HCT116 (cell line): ENCODE measurements at regions of chr18 and their contacts with region 1.

Region 1: DNA sequence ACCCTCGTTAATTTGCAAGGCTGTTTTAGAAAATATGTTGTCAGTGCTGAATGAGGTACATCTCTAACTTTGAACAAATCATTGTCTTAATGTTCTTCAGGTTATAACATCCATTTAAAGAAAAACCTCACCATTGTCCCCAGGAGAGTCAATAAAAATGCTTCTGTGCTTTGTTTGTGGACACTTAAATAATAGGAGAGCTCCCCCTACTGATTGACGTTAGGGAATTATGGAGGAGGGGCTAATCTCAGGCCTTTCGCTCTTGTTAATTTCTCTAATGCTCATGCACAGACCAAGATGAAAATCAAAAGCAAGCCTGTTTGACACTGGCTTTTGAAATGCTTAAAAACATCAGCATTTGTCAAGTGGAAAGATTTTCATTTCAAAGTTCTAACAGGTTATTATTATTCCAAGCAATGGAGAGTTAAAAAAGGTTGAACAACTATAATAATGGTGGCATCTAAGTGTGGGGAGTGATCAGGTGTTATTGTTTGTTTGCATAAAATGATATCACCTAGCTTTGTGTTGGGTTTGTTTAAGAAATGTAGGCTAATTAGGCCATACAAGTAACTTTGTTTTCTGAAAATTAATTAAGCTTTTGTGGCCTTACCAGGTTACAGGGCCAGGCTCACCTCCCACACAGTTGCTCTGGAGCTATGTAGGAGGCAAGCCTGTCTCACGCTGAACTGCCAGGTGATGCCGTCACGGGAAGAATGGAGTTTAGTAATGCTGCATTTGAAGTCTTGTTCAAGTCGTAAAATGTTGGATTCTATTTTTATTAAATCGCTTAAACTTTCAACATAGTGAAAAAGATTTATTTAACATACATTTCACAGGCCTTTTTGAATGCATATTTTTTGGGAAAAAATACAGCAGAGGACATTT is 51.7 kb upstream of the SMIM21 start:
- DNase-seq: peak; percentile 51
- ATAC-seq: peak; percentile 96
- H3K4me3 ChIP-seq: no peak overlapping the region
- H3K27ac ChIP-seq: no peak overlapping the region
- H3K4me1 ChIP-seq: peaks cover 0 to 10% of the 10 kb centered on the region in 2 experiments; a peak in 1 of 4 replicates
- H3K27me3 ChIP-seq: no peaks in the 10 kb centered on the region
- CTCF ChIP-seq: peak; percentile 54 to 78 (median 61); a peak in 5 of 6 replicates
- POLR2A ChIP-seq: no peak
- RAD21 ChIP-seq: peak; percentile 80

Region 2: GRCh38 chr18:74896390-74896991 is 582.7 kb before region 1 on chr18:
- CTCF ChIA-PET with region 1: no interaction called
- POLR2A ChIA-PET with region 1: no interaction called
- RAD21 ChIA-PET with region 1: no interaction called
- intact Hi-C with region 1: loop called (anchors 2 kb)
- DNase-seq: peak; percentile 51
- ATAC-seq: peak; percentile 99
- H3K4me3 ChIP-seq: no peak overlapping the region
- H3K27ac ChIP-seq: no peak overlapping the region
- H3K4me1 ChIP-seq: peaks cover 3 to 9% of the 10 kb centered on the region in 2 experiments; a peak in 3 of 4 replicates
- H3K27me3 ChIP-seq: no peaks in the 10 kb centered on the region
- CTCF ChIP-seq: peak; percentile 37 to 78 (median 75); a peak in 5 of 6 replicates
- POLR2A ChIP-seq: no peak
- RAD21 ChIP-seq: peak; percentile 67

Region 3: DNA sequence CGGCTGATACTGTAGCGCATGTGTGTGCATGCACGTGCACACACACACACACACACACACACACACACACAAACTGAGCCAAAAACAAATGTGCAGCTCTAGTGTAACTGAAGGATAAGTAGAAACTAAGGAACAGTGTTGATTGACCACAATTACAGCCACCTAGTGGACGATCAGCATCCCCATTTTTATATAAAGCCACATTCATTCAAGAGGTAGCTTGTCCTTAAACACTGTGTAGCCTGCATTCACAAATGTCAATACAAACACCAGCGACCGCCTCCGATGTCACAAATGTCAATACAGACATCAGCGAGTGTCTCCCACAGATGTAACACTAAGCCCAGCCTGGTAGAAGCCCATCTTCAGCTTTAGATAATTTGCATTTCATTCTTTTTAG is 437.7 kb before region 1 on chr18:
- CTCF ChIA-PET with region 1: no interaction called
- POLR2A ChIA-PET with region 1: no interaction called
- RAD21 ChIA-PET with region 1: no interaction called
- intact Hi-C with region 1: loop called (anchors 10 kb)
- DNase-seq: peak; percentile 23
- ATAC-seq: peak; percentile 86
- H3K4me3 ChIP-seq: no peak overlapping the region
- H3K27ac ChIP-seq: no peak overlapping the region
- H3K4me1 ChIP-seq: no peaks in the 10 kb centered on the region
- H3K27me3 ChIP-seq: no peaks in the 10 kb centered on the region
- CTCF ChIP-seq: peak; percentile 34 to 66 (median 39); a peak in 4 of 6 replicates
- POLR2A ChIP-seq: no peak
- RAD21 ChIP-seq: peak; percentile 44

Region 4: GRCh38 chr18:75210274-75211001 is 268.8 kb before region 1 on chr18 and contains the start of gene TSHZ1:
- CTCF ChIA-PET with region 1: interaction called, 7 read pairs
- POLR2A ChIA-PET with region 1: no interaction called
- RAD21 ChIA-PET with region 1: interaction called in 1 of 2 experiments, 3 read pairs
- intact Hi-C with region 1: loop called (anchors 1 kb)
- DNase-seq: peak; percentile 72
- ATAC-seq: peak; percentile 13; the same call in 1 of the 2 replicates
- H3K4me3 ChIP-seq: peak within 1 kb of the TSS; percentile 75 to 93
- H3K27ac ChIP-seq: peak within 1 kb of the TSS; percentile 96
- H3K4me1 ChIP-seq: peaks cover 24 to 38% of the 10 kb centered on the region in 2 experiments
- H3K27me3 ChIP-seq: no peaks in the 10 kb centered on the region
- CTCF ChIP-seq: no peak
- POLR2A ChIP-seq: peak; percentile 55
- RAD21 ChIP-seq: no peak
- total RNA-seq, gene TSHZ1: 5.7 TPM